Activated CD4-positive, alpha-beta memory T cell treated with anti-CD3 and anti-CD28 coated beads, Interleukin-2, amount 10 ng/mL, durations not matched to agents 7 days and 5 days (primary cell): ENCODE measurements at regions of chr9 and their contacts with region 1.

Region 1: DNA sequence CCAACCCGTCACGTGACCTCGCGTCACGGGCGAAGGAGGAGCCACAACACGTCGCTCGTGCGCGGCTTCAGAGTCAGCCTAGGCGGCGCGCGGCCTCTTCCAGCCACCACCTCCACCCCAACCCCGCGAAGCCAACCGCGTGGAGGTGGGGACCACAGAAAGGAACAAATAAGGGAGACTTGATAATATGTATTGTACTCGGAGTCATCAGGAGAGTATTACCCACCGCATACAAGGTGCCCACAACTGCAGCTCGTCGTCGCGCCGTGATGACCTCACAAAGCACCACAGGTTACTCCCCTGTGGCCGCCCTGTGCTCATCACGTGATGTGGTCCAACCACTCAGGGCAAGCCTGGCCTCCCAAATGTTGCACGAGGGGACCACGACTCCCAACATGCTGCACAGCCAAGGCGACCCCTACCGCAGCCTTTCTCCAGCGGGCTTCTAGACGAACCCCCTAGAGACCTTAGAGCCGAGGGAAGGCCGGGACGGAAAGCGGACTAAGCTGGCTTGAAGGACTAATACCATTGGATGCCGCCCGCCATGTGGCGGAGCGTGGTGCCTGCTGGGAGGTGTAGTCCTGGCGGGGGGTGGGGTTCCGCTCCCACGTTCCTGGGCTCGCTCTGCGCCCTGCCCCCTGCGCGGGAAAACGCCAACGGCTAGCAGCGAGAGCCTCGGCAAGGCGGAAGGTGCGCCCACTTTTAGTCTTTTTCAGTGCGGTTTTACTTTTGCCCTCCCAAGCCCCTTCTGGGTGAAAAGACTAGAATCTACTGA is 423 bp upstream of the UBAP2 start:
- DNase-seq: peak; percentile 97
- H3K4me3 Mint-ChIP-seq: peak overlapping the region; percentile 89
- H3K27ac Mint-ChIP-seq: peak overlapping the region; percentile 97
- H3K4me1 Mint-ChIP-seq: peaks cover 58% of the 10 kb centered on the region
- H3K27me3 Mint-ChIP-seq: no peaks in the 10 kb centered on the region

Region 2: DNA sequence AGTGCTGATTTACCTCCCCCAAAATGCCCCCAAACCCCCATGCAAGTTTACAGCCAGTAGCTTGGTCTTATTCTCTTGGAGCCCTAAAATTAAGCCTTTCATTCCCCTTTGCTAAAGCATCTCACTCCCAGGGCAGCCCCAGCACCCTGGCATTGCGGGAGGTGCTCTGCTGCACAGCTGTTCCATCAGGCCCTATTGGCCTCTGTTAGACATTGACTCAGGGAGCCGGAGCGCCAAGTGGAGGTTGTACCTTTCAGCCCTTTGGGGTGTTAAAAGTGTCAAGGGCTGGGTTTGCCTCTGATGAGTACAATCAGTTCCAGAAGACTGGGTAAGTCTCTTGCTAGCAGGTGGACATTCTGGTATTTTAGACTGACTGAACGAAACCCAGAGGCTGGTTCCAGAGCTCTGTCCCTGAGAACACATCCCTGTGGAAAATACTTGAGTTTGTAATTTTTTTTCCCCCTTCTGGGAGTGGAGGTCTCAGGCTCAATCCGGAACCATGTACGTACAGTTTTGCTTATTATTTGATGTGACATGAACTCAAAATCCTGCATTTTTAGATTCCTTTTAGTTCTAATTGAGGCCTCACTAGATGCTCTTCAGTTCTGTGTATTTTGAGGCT is 129.7 kb before region 1 on chr9:
- CTCF ChIA-PET with region 1: no interaction called
- POLR2A ChIA-PET with region 1: no interaction called
- DNase-seq: no peak
- H3K4me3 Mint-ChIP-seq: no peak overlapping the region
- H3K27ac Mint-ChIP-seq: no peak overlapping the region
- H3K4me1 Mint-ChIP-seq: no peaks in the 10 kb centered on the region
- H3K27me3 Mint-ChIP-seq: no peaks in the 10 kb centered on the region

Region 3: GRCh38 chr9:34059281-34059680 is 10.2 kb after region 1 on chr9:
- CTCF ChIA-PET with region 1: no interaction called
- POLR2A ChIA-PET with region 1: interaction called, 13 read pairs
- DNase-seq: no peak
- H3K4me3 Mint-ChIP-seq: no peak overlapping the region
- H3K27ac Mint-ChIP-seq: no peak overlapping the region
- H3K4me1 Mint-ChIP-seq: no peaks in the 10 kb centered on the region
- H3K27me3 Mint-ChIP-seq: peaks cover 7% of the 10 kb centered on the region

Region 4: DNA sequence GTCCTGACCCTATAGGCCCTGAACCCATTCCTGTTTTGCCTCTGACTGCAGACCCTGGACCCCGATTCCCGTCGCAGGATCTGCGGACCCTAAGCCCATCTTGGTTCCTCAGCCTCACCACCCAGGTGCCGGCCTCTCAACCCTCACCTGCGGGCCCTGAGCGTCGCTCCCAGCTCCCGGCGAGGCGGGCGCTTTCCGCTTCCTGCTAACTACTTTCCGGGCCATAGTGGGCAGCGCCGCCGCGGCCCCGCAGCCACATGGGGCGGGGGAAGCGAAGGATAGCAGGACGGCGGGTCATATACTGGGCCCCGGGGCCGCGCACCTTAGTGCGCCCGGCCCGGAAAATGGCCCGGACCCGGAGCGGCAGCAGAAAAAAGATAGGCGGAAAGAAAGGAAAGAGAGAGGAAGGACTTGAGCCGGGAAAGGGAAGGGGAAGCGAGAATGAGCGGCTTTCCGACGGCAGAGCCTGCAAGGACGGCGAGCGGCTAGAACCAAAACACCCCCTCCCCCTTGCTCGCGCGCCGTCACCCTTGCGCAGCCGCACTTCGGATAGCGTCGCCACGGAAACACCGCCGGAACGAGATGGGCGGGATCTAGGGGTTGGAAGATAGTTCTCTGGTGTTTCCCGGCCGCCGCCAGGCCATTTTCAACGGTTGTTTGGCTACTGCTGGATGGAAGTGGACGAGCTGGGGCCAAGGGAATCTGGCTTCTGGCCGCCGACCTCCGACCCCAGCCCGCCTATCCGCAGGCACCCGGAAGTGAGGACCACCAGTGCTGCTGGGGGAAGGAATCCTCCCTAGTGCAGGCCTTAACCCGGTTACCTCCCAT is 77.3 kb after region 1 on chr9 and contains the start of gene DCAF12:
- CTCF ChIA-PET with region 1: no interaction called
- POLR2A ChIA-PET with region 1: interaction called, 14 read pairs
- DNase-seq: peak; percentile 92
- H3K4me3 Mint-ChIP-seq: peak within 1 kb of the TSS; percentile 89
- H3K27ac Mint-ChIP-seq: peak within 1 kb of the TSS; percentile 92
- H3K4me1 Mint-ChIP-seq: peaks cover 39% of the 10 kb centered on the region
- H3K27me3 Mint-ChIP-seq: no peaks in the 10 kb centered on the region
- total RNA-seq, gene DCAF12: 44.1 to 46.9 TPM

Region 5: GRCh38 chr9:34262939-34263338 is 213.8 kb after region 1 on chr9:
- CTCF ChIA-PET with region 1: no interaction called
- POLR2A ChIA-PET with region 1: no interaction called
- DNase-seq: no peak
- H3K4me3 Mint-ChIP-seq: no peak overlapping the region
- H3K27ac Mint-ChIP-seq: no peak overlapping the region
- H3K4me1 Mint-ChIP-seq: peaks cover 9% of the 10 kb centered on the region
- H3K27me3 Mint-ChIP-seq: no peaks in the 10 kb centered on the region